CD4-positive, alpha-beta T cell (primary cell): ENCODE measurements at regions of chr6 and their contacts with region 1.

Region 1: GRCh38 chr6:157021344-157021992 is 244.3 kb downstream of the ARID1B start:
- DNase-seq: peak; percentile 78 to 95 (median 88)
- ATAC-seq: peak; percentile 77
- H3K4me3 ChIP-seq: peak overlapping the region; percentile 96
- H3K4me3 Mint-ChIP-seq: peak overlapping the region; percentile 99
- H3K27ac ChIP-seq: peak overlapping the region; percentile 98 to 99
- H3K27ac Mint-ChIP-seq: peak overlapping the region; percentile 100
- H3K4me1 ChIP-seq: peaks cover 14% of the 10 kb centered on the region
- H3K4me1 Mint-ChIP-seq: peaks cover 72% of the 10 kb centered on the region
- H3K27me3 ChIP-seq: no peaks in the 10 kb centered on the region
- H3K27me3 Mint-ChIP-seq: no peaks in the 10 kb centered on the region
- CTCF ChIP-seq: peak; percentile 42

Region 2: GRCh38 chr6:156378853-156379252 is 642.6 kb before region 1 on chr6:
- CTCF ChIA-PET with region 1: no interaction called
- POLR2A ChIA-PET with region 1: no interaction called
- intact Hi-C with region 1: loop called in 1 of 2 experiments (anchors 10 kb)
- DNase-seq: peak in 4 of 14 experiments; percentile 21 to 61 (median 48)
- ATAC-seq: peak; percentile 79
- H3K4me3 ChIP-seq: no peak overlapping the region
- H3K4me3 Mint-ChIP-seq: no peak overlapping the region
- H3K27ac ChIP-seq: no peak overlapping the region
- H3K27ac Mint-ChIP-seq: no peak overlapping the region
- H3K4me1 ChIP-seq: peaks cover 2% of the 10 kb centered on the region
- H3K4me1 Mint-ChIP-seq: peaks cover 14% of the 10 kb centered on the region
- H3K27me3 ChIP-seq: no peaks in the 10 kb centered on the region
- H3K27me3 Mint-ChIP-seq: no peaks in the 10 kb centered on the region
- CTCF ChIP-seq: peak; percentile 50

Region 3: GRCh38 chr6:156564127-156564806 is 457.2 kb before region 1 on chr6:
- CTCF ChIA-PET with region 1: no interaction called
- POLR2A ChIA-PET with region 1: no interaction called
- intact Hi-C with region 1: loop called in 1 of 2 experiments (anchors 5 kb)
- DNase-seq: peak; percentile 47 to 85 (median 74)
- ATAC-seq: peak; percentile 94
- H3K4me3 ChIP-seq: no peak overlapping the region
- H3K4me3 Mint-ChIP-seq: no peak overlapping the region
- H3K27ac ChIP-seq: no peak overlapping the region
- H3K27ac Mint-ChIP-seq: no peak overlapping the region
- H3K4me1 ChIP-seq: peaks cover 6% of the 10 kb centered on the region
- H3K4me1 Mint-ChIP-seq: peaks cover 4% of the 10 kb centered on the region
- H3K27me3 ChIP-seq: no peaks in the 10 kb centered on the region
- H3K27me3 Mint-ChIP-seq: peaks cover 16% of the 10 kb centered on the region
- CTCF ChIP-seq: peak; percentile 89

Region 4: GRCh38 chr6:156776840-156777576 is 244.5 kb before region 1 on chr6 and contains the start of gene ARID1B:
- CTCF ChIA-PET with region 1: interaction called, 4 read pairs
- POLR2A ChIA-PET with region 1: interaction called, 86 read pairs
- intact Hi-C with region 1: loop called (anchors 1 to 2 kb)
- DNase-seq: peak; percentile 69 to 92 (median 76)
- ATAC-seq: peak; percentile 55
- H3K4me3 ChIP-seq: peak within 1 kb of the TSS; percentile 89
- H3K4me3 Mint-ChIP-seq: peak within 1 kb of the TSS; percentile 95
- H3K27ac ChIP-seq: peak within 1 kb of the TSS; percentile 83 to 90
- H3K27ac Mint-ChIP-seq: peak within 1 kb of the TSS; percentile 97
- H3K4me1 ChIP-seq: peaks cover 12% of the 10 kb centered on the region
- H3K4me1 Mint-ChIP-seq: peaks cover 46% of the 10 kb centered on the region
- H3K27me3 ChIP-seq: no peaks in the 10 kb centered on the region
- H3K27me3 Mint-ChIP-seq: no peaks in the 10 kb centered on the region
- CTCF ChIP-seq: no peak
- total RNA-seq, gene ARID1B: 120 to 125 TPM

Region 5: GRCh38 chr6:157034436-157035230 is 13.2 kb after region 1 on chr6:
- CTCF ChIA-PET with region 1: interaction called, 3 read pairs
- POLR2A ChIA-PET with region 1: interaction called, 38 read pairs
- intact Hi-C with region 1: no loop called
- DNase-seq: peak in 3 of 14 experiments; percentile 63 to 72 (median 71)
- ATAC-seq: peak; percentile 86
- H3K4me3 ChIP-seq: no peak overlapping the region
- H3K4me3 Mint-ChIP-seq: peak overlapping the region; percentile 73
- H3K27ac ChIP-seq: no peak overlapping the region
- H3K27ac Mint-ChIP-seq: peak overlapping the region; percentile 86
- H3K4me1 ChIP-seq: peaks cover 2% of the 10 kb centered on the region
- H3K4me1 Mint-ChIP-seq: peaks cover 36% of the 10 kb centered on the region
- H3K27me3 ChIP-seq: no peaks in the 10 kb centered on the region
- H3K27me3 Mint-ChIP-seq: no peaks in the 10 kb centered on the region
- CTCF ChIP-seq: peak; percentile 71

Region 6: GRCh38 chr6:157274471-157275226 is 253.2 kb after region 1 on chr6:
- CTCF ChIA-PET with region 1: no interaction called
- POLR2A ChIA-PET with region 1: interaction called, 11 read pairs
- intact Hi-C with region 1: loop called in 1 of 2 experiments (anchors 5 kb)
- DNase-seq: peak; percentile 67 to 94 (median 78)
- ATAC-seq: peak; percentile 83
- H3K4me3 ChIP-seq: peak overlapping the region; percentile 74
- H3K4me3 Mint-ChIP-seq: peak overlapping the region; percentile 97
- H3K27ac ChIP-seq: peak overlapping the region; percentile 70 to 79
- H3K27ac Mint-ChIP-seq: peak overlapping the region; percentile 98
- H3K4me1 ChIP-seq: peaks cover 17% of the 10 kb centered on the region
- H3K4me1 Mint-ChIP-seq: peaks cover 13% of the 10 kb centered on the region
- H3K27me3 ChIP-seq: no peaks in the 10 kb centered on the region
- H3K27me3 Mint-ChIP-seq: no peaks in the 10 kb centered on the region
- CTCF ChIP-seq: peak; percentile 56

Region 7: GRCh38 chr6:157981395-157982296 is 960.2 kb after region 1 on chr6 and contains the start of gene SYNJ2:
- CTCF ChIA-PET with region 1: no interaction called
- POLR2A ChIA-PET with region 1: no interaction called
- intact Hi-C with region 1: loop called in 1 of 2 experiments (anchors 10 kb)
- DNase-seq: peak; percentile 71 to 94 (median 83)
- ATAC-seq: peak; percentile 88
- H3K4me3 ChIP-seq: peak within 1 kb of the TSS; percentile 81
- H3K4me3 Mint-ChIP-seq: peak within 1 kb of the TSS; percentile 87
- H3K27ac ChIP-seq: peak within 1 kb of the TSS; percentile 55 to 58
- H3K27ac Mint-ChIP-seq: peak within 1 kb of the TSS; percentile 74
- H3K4me1 ChIP-seq: peaks cover 54% of the 10 kb centered on the region
- H3K4me1 Mint-ChIP-seq: peaks cover 56% of the 10 kb centered on the region
- H3K27me3 ChIP-seq: no peaks in the 10 kb centered on the region
- H3K27me3 Mint-ChIP-seq: no peaks in the 10 kb centered on the region
- CTCF ChIP-seq: peak; percentile 37
- total RNA-seq, gene SYNJ2: 34.6 to 38.0 TPM